CD4-positive, alpha-beta T cell (primary cell): ENCODE measurements at regions of chrX and their contacts with region 1.

Region 1: GRCh38 chrX:40013266-40014195 is 84.2 kb downstream of the BCOR start:
- DNase-seq: peak in 7 of 14 experiments; percentile 3 to 67 (median 40)
- ATAC-seq: peak; percentile 30
- H3K4me3 ChIP-seq: peak overlapping the region; percentile 61
- H3K4me3 Mint-ChIP-seq: peak overlapping the region; percentile 81
- H3K27ac ChIP-seq: no peak overlapping the region
- H3K27ac Mint-ChIP-seq: no peak overlapping the region
- H3K4me1 ChIP-seq: peaks cover 52% of the 10 kb centered on the region
- H3K4me1 Mint-ChIP-seq: peaks cover 32% of the 10 kb centered on the region
- H3K27me3 ChIP-seq: peaks cover 0 to 29% of the 10 kb centered on the region in 2 experiments
- H3K27me3 Mint-ChIP-seq: peaks cover 24% of the 10 kb centered on the region
- CTCF ChIP-seq: no peak

Region 2: GRCh38 chrX:40058719-40059118 is 45.2 kb after region 1 on chrX:
- CTCF ChIA-PET with region 1: no interaction called
- POLR2A ChIA-PET with region 1: interaction called, 4 read pairs
- intact Hi-C with region 1: loop called in 1 of 2 experiments (anchors 5 kb)
- DNase-seq: no peak
- ATAC-seq: no peak
- H3K4me3 ChIP-seq: no peak overlapping the region
- H3K4me3 Mint-ChIP-seq: no peak overlapping the region
- H3K27ac ChIP-seq: no peak overlapping the region
- H3K27ac Mint-ChIP-seq: no peak overlapping the region
- H3K4me1 ChIP-seq: peaks cover 11% of the 10 kb centered on the region
- H3K4me1 Mint-ChIP-seq: peaks cover 20% of the 10 kb centered on the region
- H3K27me3 ChIP-seq: no peaks in the 10 kb centered on the region
- H3K27me3 Mint-ChIP-seq: no peaks in the 10 kb centered on the region
- CTCF ChIP-seq: no peak

Region 3: DNA sequence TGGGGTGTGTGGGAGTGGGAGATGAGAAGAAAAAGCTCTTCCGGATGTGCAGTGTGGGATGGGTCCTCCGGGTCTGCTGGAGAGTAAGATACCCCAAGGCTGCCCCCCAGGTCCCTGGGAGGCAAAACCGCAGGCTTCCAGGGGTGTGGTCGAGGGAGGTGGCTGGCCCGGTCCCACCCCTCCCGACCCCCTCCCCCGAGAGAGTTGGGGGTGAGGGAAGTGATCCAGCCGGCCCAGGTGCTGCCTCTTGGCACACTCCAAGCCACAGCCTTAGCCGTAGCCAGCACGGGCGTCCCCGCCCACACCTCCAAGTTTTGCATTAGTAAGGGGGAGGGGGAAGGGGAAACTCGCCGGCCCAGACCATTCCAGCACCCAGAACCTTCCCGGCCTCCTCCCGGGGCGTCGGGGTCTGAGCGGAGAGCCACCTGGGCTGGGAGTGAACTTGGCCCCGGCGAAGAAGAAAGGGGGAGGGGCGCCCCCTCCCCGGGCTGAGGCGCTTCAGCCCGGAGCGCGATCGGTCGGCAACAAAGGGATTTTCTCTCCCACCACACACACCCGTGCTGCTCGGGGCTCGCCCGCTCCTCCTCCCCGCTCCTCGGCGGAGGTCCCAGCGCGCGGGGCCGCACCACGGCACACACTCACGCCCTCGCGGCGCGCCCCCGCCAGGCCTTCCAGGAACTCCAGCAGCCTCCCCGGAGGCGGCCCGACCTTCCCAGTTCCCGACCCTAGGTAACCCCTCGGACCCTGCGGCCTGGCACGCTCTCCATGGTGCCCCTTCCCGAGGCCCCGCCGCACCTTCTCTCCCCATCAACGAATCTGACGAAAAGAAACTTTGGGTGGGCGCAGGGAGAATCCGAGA is 69.8 kb after region 1 on chrX:
- CTCF ChIA-PET with region 1: no interaction called
- POLR2A ChIA-PET with region 1: interaction called, 4 read pairs
- intact Hi-C with region 1: loop called (anchors 5 to 10 kb)
- DNase-seq: peak in 2 of 14 experiments; percentile 38 to 40
- ATAC-seq: peak; percentile 51
- H3K4me3 ChIP-seq: peak overlapping the region; percentile 51
- H3K4me3 Mint-ChIP-seq: peak overlapping the region; percentile 89
- H3K27ac ChIP-seq: no peak overlapping the region
- H3K27ac Mint-ChIP-seq: peak overlapping the region; percentile 36
- H3K4me1 ChIP-seq: peaks cover 71% of the 10 kb centered on the region
- H3K4me1 Mint-ChIP-seq: peaks cover 58% of the 10 kb centered on the region
- H3K27me3 ChIP-seq: no peaks in the 10 kb centered on the region
- H3K27me3 Mint-ChIP-seq: no peaks in the 10 kb centered on the region
- CTCF ChIP-seq: no peak